Right cardiac atrium (tissue), 5 donors: ENCODE measurements at regions of chr1 and their contacts with region 1.

Region 1: GRCh38 chr1:91885716-91886506 is at the start of gene TGFBR3:
- DNase-seq: peak; percentile 95 to 98 (median 98)
- ATAC-seq: peak; percentile 98
- H3K4me3 ChIP-seq: peak within 1 kb of the TSS; percentile 77
- H3K27ac ChIP-seq: peak within 1 kb of the TSS; percentile 86
- H3K4me1 ChIP-seq: peaks cover 2% of the 10 kb centered on the region
- H3K27me3 ChIP-seq: no peaks in the 10 kb centered on the region
- total RNA-seq, gene TGFBR3: 36.4 to 52.4 (median 39.2) TPM

Region 2: GRCh38 chr1:90781534-90781933 is 1104.4 kb before region 1 on chr1:
- intact Hi-C with region 1: no loop called
- DNase-seq: no peak
- ATAC-seq: no peak
- H3K4me3 ChIP-seq: no peak overlapping the region
- H3K27ac ChIP-seq: no peak overlapping the region
- H3K4me1 ChIP-seq: no peaks in the 10 kb centered on the region
- H3K27me3 ChIP-seq: no peaks in the 10 kb centered on the region

Region 3: GRCh38 chr1:91635763-91636162 is 250.1 kb before region 1 on chr1:
- intact Hi-C with region 1: no loop called
- DNase-seq: no peak
- ATAC-seq: no peak
- H3K4me3 ChIP-seq: no peak overlapping the region
- H3K27ac ChIP-seq: no peak overlapping the region
- H3K4me1 ChIP-seq: no peaks in the 10 kb centered on the region
- H3K27me3 ChIP-seq: no peaks in the 10 kb centered on the region

Region 4: DNA sequence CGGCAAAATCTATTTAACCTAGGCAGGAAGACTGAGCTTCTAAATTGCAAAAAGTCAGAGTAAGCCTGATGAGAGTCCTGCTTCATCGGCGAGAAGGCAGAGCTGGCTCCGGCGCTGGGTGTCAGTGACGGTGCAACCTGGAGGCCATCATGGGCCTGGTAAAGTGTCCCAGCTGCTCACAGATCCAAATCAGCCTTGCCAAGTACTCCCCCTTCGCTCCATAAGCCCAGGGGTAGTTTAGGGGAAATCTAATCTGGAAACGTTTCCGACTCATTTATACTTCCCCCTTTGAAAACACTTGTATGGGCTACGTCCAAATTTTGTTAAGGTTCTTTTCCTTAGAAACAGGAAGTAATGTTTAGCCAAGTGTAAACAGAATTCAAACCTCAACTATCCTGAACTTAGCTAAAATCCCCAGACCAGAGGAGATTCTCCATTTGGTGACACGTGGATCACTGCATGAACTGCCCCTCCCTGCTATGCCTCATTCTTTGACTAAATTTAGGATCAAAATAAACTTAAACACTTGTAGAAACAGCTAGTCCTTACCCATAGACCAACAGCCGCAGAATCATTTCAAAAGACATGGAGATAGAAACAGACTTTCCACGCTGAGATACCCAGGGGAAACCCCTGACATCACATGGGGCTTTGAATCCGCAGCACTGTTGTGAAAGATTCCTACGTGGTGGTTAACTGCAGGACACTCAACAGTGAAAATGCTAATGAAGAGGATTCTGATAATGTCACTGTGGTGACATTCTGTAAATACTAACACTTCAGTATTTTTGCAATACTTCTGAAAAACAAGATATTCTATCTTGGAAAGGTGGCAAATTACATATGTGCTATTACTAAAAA is 172.7 kb before region 1 on chr1:
- intact Hi-C with region 1: loop called in 2 of 4 experiments (anchors 10 kb)
- DNase-seq: peak; percentile 59 to 88 (median 87)
- ATAC-seq: peak; percentile 84 to 90
- H3K4me3 ChIP-seq: peak overlapping the region; percentile 43
- H3K27ac ChIP-seq: peak overlapping the region; percentile 93
- H3K4me1 ChIP-seq: peaks cover 5% of the 10 kb centered on the region
- H3K27me3 ChIP-seq: no peaks in the 10 kb centered on the region

Region 5: DNA sequence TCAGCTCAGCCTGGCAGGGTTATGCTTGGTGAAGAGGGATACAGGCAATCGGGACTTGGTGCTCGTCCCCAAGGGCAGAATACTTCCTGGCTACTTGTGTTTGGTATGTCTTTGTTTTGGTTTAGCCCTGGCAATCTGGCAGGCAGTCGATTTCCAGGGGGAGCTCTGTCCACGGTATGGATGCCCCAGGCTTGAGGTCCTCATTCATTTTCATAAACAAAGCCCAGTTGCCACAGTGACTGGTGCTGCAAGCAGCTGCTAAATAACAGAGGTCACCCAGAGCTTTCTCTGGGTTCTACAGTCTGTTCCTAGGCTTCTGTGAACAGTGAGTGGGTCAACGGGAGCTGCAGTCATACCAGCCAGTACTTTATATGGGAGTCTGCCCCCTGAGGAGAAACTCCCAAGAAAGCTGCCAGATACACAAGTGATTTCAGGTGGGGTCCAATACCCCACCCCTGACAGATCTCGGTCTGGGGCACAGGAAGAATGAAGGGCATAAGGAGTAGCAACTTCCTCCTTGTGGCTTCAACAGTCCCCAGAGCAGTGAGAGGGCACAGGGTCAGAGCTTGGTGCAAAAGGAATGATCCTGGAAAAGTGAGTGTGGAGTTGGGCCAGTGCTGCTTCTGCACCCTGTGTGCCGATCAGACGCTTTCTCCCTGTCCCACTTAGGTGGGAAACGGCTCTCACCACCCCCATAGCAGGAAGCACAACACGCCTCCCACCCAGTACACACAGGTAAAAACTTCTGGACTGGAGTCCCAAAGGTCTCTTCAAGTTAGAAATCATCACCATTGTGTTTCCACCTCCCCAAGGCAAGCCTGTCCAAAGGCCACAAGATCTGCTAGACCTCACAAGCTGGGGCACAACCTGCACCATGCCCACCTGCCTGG is 55.4 kb before region 1 on chr1:
- intact Hi-C with region 1: loop called in 2 of 4 experiments (anchors 10 kb)
- DNase-seq: peak; percentile 75 to 92 (median 87)
- ATAC-seq: peak; percentile 82 to 85
- H3K4me3 ChIP-seq: no peak overlapping the region
- H3K27ac ChIP-seq: peak overlapping the region; percentile 85
- H3K4me1 ChIP-seq: peaks cover 24% of the 10 kb centered on the region
- H3K27me3 ChIP-seq: no peaks in the 10 kb centered on the region

Region 6: DNA sequence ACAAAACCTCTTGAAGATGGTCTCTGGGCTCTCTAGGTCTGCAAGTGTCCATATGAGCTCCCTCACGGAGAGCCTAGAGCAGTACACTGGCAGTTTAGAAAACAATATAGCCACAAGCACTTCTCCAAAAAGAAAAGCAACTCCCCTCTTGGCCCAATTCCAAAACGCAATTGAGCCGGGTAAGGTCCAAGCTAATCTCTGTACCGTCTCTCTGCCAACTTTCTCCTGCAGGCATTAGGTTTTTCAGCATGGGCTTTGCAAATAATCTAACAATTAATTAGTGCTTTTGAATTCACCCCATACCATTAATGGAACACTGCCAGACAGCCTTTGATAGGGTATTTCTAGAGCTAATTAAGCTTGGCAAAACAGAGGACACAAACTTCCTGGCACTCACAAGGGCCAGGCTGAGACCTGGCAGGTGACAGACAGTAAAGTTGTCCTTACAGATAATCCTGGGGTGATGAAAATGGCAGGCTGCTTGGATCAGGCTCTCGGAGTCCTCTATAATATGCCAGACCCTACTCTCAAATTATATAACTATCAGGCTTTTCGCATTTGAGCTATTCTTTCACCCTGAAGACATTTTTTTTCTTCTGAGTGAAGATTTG is 39.8 kb before region 1 on chr1:
- intact Hi-C with region 1: loop called in 1 of 4 experiments (anchors 5 kb)
- DNase-seq: peak in 2 of 3 donors; percentile 39 to 64
- ATAC-seq: peak; percentile 77 to 83
- H3K4me3 ChIP-seq: no peak overlapping the region
- H3K27ac ChIP-seq: peak overlapping the region; percentile 86
- H3K4me1 ChIP-seq: peaks cover 13% of the 10 kb centered on the region
- H3K27me3 ChIP-seq: no peaks in the 10 kb centered on the region

Region 7: DNA sequence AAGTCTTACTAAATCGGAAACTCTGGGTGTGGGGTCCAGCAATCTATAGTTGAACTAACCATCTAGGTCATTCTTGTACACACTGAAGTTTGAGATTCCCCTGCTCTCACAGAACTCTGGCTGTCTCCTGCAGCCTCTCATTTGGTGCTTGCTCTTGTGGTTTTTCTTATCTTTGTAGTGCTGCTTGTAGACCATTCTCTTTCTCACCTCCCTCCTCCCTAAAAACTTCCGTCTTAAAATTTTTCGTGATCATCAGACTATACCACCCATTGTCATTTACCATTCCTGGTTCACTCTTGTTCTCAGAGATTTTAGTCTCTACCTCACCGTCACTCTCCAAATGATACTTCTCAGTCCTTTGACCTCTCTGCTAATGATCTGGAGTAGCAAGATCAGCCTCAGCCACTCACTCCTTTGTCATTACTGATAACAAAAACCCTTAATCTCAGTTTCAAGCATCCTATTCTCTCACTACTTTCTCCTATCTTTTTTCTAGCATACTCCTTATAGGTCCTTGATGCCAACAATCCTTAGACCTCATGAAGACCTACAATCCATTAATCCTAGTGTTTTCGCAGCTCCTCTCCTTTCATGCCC is 130.9 kb after region 1 on chr1:
- intact Hi-C with region 1: no loop called
- DNase-seq: no peak
- ATAC-seq: no peak
- H3K4me3 ChIP-seq: no peak overlapping the region
- H3K27ac ChIP-seq: no peak overlapping the region
- H3K4me1 ChIP-seq: no peaks in the 10 kb centered on the region
- H3K27me3 ChIP-seq: no peaks in the 10 kb centered on the region

Region 8: DNA sequence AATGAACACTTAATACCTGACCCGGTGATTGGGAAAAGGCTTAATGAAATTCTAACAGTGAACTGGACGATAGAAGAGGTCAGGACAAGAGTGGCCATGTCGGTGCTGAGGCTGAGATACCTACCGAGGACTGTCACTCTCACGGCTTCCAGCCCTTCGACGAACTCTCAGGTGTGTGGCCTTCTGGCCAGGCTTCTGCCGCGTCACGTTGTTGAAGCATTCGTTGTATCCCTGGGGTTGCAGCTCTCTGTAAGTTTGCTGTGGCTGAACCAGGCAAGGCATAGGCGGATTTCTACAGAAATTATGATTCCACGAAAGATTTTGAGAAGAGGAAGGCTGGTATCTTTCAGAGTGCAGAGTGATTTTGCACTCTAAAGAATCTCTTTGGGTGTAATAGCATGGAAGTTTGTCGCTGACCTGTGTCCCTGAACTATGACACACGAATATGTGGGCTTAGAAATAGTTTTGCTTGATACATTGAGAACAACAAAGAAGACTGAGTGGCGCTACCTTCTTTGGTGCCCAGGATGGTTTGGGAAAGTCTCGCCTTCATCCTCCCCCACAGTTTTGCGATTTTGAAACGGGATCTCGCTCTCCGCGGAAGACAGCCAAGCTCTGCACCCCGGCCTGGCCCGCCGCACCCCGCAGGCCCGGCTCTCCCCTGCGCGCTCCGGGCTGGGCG is 143.5 kb after region 1 on chr1:
- intact Hi-C with region 1: no loop called
- DNase-seq: no peak
- ATAC-seq: no peak
- H3K4me3 ChIP-seq: peak overlapping the region; percentile 75
- H3K27ac ChIP-seq: no peak overlapping the region
- H3K4me1 ChIP-seq: no peaks in the 10 kb centered on the region
- H3K27me3 ChIP-seq: no peaks in the 10 kb centered on the region